ENCODE measurements at regions of chr1 and their contacts with region 1.

Region 1: GRCh38 chr1:91537281-91537986 is 36.8 kb downstream of the CDC7 start:
- DNase-seq: peak; percentile 66
- H3K4me3 Mint-ChIP-seq: peak overlapping the region; percentile 19
- H3K27ac Mint-ChIP-seq: peak overlapping the region; percentile 76
- H3K4me1 Mint-ChIP-seq: peaks cover 25% of the 10 kb centered on the region
- H3K27me3 Mint-ChIP-seq: no peaks in the 10 kb centered on the region
- CTCF ChIP-seq: no peak

Region 2: DNA sequence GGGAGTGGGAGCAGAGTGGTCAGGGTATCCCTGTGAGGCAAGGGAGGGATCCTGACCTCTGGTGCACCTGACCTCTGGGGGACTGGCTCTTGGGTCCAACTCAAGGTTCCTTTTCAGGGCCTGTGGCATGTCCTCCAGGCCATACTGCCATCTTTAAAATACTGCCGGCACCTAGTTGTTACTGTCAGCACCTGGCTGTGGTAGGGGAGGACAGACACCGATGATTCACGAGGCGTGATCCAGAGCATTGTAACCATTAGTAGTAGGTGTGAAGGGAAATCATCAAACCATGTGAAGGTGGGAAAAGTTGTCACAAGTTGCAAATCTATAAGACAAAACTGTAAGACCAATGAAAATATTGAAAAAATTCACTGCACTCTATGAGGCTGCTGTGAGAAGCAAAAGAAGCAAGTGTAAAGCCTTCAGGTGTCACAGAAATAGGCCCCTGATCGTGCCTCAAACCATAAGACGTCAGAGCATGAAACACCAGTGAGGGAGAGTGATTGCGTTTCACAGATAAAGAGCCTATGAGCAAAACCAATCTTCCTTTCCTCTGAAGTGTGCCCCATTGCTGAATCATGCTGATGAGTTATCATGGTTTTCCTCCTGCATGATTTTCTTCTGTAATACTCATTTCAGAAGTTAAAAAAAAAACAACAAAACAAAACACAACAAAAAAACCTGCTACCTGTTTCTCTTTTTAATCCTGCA is 18.5 kb after region 1 on chr1:
- CTCF ChIA-PET with region 1: interaction called, 3 read pairs
- POLR2A ChIA-PET with region 1: interaction called, 39 read pairs
- intact Hi-C with region 1: no loop called
- DNase-seq: peak; percentile 25
- H3K4me3 Mint-ChIP-seq: no peak overlapping the region
- H3K27ac Mint-ChIP-seq: peak overlapping the region; percentile 84
- H3K4me1 Mint-ChIP-seq: peaks cover 45% of the 10 kb centered on the region
- H3K27me3 Mint-ChIP-seq: no peaks in the 10 kb centered on the region
- CTCF ChIP-seq: no peak

Region 3: DNA sequence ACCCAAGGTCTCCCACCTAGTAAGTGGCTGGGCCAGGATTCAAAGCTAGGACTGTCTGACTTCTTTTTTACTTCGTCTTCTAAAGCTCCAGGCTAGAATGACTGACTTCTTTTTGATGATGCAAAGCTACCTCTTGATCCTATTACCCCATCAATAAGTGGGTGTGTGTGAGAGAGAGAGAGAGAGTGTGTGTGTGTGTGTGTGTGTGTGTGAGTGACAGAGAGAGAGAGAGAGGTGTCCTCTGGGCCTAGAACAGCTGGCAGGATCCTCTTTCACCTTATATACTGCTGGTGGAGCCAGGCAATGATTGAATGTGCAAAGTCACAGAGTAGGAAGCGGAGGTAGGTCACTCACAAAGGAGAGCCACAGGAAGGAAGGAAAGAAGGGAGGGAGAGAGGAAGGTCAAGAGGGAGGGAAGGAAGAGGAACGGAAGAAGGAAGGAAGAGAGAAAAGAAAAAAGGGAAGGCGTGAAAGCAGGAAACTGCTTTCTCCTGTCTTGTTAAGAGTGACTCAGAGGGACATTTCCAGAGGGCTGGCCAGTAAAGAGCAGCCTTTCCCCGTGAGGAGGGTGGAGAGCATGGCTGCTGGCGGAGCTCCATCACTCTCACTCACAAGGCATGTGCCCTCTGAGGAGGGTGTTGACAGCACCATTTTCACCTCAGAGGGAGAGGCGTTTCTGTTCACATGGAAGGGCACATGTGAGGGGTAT is 32.1 kb after region 1 on chr1:
- CTCF ChIA-PET with region 1: interaction called, 3 read pairs
- POLR2A ChIA-PET with region 1: interaction called, 29 read pairs
- intact Hi-C with region 1: no loop called
- DNase-seq: peak; percentile 90
- H3K4me3 Mint-ChIP-seq: peak overlapping the region; percentile 64
- H3K27ac Mint-ChIP-seq: peak overlapping the region; percentile 98
- H3K4me1 Mint-ChIP-seq: peaks cover 16% of the 10 kb centered on the region
- H3K27me3 Mint-ChIP-seq: no peaks in the 10 kb centered on the region
- CTCF ChIP-seq: no peak

Region 4: GRCh38 chr1:91611498-91611917 is 74.1 kb after region 1 on chr1:
- CTCF ChIA-PET with region 1: interaction called, 15 read pairs
- POLR2A ChIA-PET with region 1: interaction called, 21 read pairs
- intact Hi-C with region 1: no loop called
- DNase-seq: peak; percentile 18
- H3K4me3 Mint-ChIP-seq: no peak overlapping the region
- H3K27ac Mint-ChIP-seq: peak overlapping the region; percentile 74
- H3K4me1 Mint-ChIP-seq: peaks cover 45% of the 10 kb centered on the region
- H3K27me3 Mint-ChIP-seq: no peaks in the 10 kb centered on the region
- CTCF ChIP-seq: no peak

Region 5: DNA sequence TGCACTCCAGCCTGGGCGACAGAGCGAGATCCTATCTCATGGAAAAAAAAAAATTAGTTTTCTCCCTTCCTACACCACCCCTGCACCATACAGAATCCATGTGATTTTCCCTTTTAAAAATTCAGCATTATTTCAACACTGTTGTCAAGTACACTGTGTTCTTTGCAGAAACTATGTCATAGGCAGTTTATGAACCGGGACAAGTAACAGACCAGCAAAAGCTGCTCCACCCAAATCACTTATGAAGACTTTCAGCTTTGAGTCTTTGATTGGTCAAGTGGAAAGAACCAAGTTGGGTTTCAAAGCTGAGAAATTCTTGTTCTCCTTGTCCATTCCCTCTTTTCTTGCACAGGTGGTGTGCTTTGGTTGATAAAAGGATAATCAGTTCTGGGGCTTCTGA is 136.2 kb after region 1 on chr1:
- CTCF ChIA-PET with region 1: no interaction called
- POLR2A ChIA-PET with region 1: interaction called, 10 read pairs
- intact Hi-C with region 1: no loop called
- DNase-seq: no peak
- H3K4me3 Mint-ChIP-seq: peak overlapping the region; percentile 10
- H3K27ac Mint-ChIP-seq: peak overlapping the region; percentile 94
- H3K4me1 Mint-ChIP-seq: peaks cover 17% of the 10 kb centered on the region
- H3K27me3 Mint-ChIP-seq: no peaks in the 10 kb centered on the region
- CTCF ChIP-seq: no peak

Region 6: DNA sequence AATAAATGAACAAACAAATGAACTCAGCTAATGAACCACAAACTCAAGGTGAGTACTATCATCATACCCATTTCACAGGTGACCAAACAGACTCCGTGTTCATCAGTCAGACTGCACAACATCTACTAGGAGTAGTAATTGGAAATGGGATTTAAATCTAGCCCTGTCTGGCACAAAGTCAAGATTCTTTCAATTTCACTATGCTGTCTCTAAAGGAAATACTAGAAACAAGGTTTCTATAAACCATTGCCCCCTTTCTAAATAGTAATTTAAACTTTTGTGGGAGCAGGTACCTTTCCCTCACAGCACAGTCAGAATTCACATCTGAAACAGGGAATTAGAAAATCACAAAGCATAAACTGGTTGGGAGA is 188.2 kb after region 1 on chr1:
- CTCF ChIA-PET with region 1: no interaction called
- POLR2A ChIA-PET with region 1: interaction called, 11 read pairs
- intact Hi-C with region 1: no loop called
- DNase-seq: no peak
- H3K4me3 Mint-ChIP-seq: no peak overlapping the region
- H3K27ac Mint-ChIP-seq: peak overlapping the region; percentile 82
- H3K4me1 Mint-ChIP-seq: peaks cover 33% of the 10 kb centered on the region
- H3K27me3 Mint-ChIP-seq: no peaks in the 10 kb centered on the region
- CTCF ChIP-seq: no peak

Region 7: GRCh38 chr1:91803847-91804545 is 266.6 kb after region 1 on chr1:
- CTCF ChIA-PET with region 1: no interaction called
- POLR2A ChIA-PET with region 1: interaction called, 10 read pairs
- intact Hi-C with region 1: no loop called
- DNase-seq: peak; percentile 78
- H3K4me3 Mint-ChIP-seq: peak overlapping the region; percentile 54
- H3K27ac Mint-ChIP-seq: peak overlapping the region; percentile 88
- H3K4me1 Mint-ChIP-seq: peaks cover 73% of the 10 kb centered on the region
- H3K27me3 Mint-ChIP-seq: no peaks in the 10 kb centered on the region
- CTCF ChIP-seq: no peak

Measured in MCF 10A (cell line).